Spleen (tissue), 13 donors: ENCODE measurements at regions of chr4 and their contacts with region 1.

Region 1: DNA sequence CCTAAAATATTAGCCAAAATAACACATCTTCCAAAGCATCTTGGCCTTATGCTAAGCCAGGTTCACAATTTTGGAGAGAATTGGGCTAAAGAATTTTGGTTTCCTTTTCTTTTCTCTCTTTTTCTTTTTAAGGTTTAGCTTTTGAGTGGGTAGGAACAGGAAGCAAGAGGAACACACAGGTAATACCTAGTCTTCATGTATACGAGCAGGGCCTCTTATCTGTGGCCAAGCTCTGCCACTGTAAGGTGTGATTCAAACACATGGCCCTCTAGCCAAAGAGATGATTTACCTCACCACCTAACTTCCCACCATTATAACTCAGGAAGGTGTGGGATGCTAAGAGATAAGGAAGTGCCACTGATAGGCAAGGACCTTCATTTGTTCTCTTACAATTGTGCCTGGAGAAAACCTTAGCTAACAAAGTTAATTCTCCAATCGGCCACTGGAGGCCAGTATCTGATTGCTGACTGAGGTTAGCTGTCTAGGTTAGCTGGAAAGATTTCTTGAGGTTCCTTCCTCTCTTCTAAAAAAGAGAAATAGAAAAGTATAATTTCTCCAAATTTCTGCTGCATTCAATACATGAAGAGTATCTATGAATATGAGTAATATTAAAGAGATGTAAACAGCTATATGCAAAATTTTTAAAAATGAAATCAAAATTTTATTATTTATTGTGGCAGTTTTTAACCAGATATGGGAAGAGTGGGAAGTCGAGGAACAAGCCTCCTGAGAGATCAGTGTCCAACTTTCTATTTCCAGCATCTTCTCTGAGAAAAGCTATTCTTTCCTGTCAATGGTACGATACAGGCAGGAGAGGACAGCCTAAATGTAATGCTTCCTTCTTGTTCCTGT is 30.1 kb upstream of the BBS7 start:
- DNase-seq: no peak
- H3K4me3 ChIP-seq: no peak overlapping the region
- H3K27ac ChIP-seq: no peak overlapping the region
- H3K4me1 ChIP-seq: peaks cover 0 to 5% (median 0%) of the 10 kb centered on the region in 6 donors
- H3K27me3 ChIP-seq: no peaks in the 10 kb centered on the region
- CTCF ChIP-seq: peak in 10 of 11 experiments; percentile 49 to 69 (median 61)
- POLR2A ChIP-seq: no peak

Region 2: DNA sequence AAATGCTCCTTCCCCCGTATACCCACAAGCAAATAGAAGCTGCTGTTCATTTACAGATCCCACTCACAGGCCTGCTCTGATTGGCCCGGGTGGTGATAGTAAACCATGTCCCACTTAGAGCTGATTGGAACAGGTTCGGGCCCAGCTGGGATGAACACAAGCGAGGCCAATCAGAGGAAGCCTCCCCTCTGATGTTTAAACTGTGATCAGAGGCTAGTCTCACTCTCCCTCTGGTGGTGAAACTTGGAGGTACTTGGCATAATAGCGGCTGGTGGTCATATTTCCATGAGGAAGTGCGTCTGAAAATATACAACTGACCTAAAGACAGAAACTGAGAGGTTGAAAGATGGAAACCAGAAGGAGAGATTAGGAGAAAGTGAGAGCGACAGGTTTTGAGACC is 103.0 kb after region 1 on chr4:
- intact Hi-C with region 1: loop called (anchors 10 kb)
- DNase-seq: no peak
- H3K4me3 ChIP-seq: no peak overlapping the region
- H3K27ac ChIP-seq: no peak overlapping the region
- H3K4me1 ChIP-seq: no peaks in the 10 kb centered on the region
- H3K27me3 ChIP-seq: no peaks in the 10 kb centered on the region
- CTCF ChIP-seq: peak in 10 of 11 experiments; percentile 13 to 61 (median 47)
- POLR2A ChIP-seq: no peak